Motor neuron (in vitro differentiated cells): ENCODE measurements at regions of chr17 and their contacts with region 1.

Region 1: GRCh38 chr17:8785547-8786413 is 13.4 kb downstream of the MFSD6L start:
- ATAC-seq: peak; percentile 81 to 100 (median 90)
- H3K4me3 ChIP-seq: no peak overlapping the region
- H3K27ac ChIP-seq: no peak overlapping the region
- H3K4me1 ChIP-seq: no peaks in the 10 kb centered on the region

Region 2: GRCh38 chr17:8079291-8080207 is 706.2 kb before region 1 on chr17:
- in situ Hi-C with region 1: loop called in 2 of 9 experiments (anchors 25 kb)
- ATAC-seq: peak; percentile 88 to 94 (median 90)
- H3K4me3 ChIP-seq: peak overlapping the region; percentile 18 to 38 (median 36)
- H3K27ac ChIP-seq: no peak overlapping the region
- H3K4me1 ChIP-seq: no peaks in the 10 kb centered on the region

Region 3: DNA sequence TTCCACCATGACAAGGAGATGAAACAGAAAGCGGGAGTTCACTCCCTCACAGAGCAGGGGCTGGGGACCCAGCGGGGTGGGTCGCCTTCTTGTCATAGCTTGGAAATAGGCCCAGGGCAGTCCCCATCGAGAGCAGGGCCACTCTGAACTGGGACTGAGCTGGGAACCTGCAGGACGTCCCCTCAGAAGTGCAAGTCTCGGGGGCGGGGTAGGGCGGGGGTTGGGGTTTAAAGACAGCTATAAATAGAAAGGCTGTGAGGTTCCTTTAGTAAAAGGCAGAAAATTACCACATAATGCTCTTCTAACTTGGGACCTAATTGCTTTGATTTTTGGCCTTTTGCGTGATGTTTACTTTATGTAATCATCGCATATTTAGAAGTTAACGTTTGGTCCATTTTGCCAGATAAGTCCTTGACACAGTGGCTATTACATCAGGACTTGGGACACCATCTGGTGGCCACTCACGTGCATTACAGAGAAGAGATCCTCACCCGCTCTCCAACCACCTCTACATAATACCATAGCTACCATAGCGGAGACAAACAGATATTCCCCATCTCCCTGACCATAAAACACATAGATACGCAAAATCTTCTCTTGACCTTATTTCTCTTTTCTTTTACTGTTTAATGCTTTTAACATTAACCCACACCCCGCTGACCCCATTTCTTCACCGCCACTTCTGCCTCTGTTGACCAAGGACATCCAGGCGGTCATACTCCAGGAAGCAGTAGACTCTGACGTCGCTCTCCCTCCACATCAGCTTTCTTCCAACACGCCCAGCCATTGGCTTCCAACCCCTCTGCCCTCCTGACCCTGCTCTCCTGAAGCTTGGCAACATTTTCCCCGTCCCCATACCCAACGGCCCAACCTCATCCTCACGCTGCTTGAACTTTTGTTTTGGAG is 109.1 kb after region 1 on chr17:
- in situ Hi-C with region 1: loop called in 1 of 9 experiments (anchors 25 kb)
- ATAC-seq: peak; percentile 81 to 99 (median 94)
- H3K4me3 ChIP-seq: no peak overlapping the region
- H3K27ac ChIP-seq: no peak overlapping the region
- H3K4me1 ChIP-seq: peaks cover 0 to 7% of the 10 kb centered on the region in 2 donors

Region 4: DNA sequence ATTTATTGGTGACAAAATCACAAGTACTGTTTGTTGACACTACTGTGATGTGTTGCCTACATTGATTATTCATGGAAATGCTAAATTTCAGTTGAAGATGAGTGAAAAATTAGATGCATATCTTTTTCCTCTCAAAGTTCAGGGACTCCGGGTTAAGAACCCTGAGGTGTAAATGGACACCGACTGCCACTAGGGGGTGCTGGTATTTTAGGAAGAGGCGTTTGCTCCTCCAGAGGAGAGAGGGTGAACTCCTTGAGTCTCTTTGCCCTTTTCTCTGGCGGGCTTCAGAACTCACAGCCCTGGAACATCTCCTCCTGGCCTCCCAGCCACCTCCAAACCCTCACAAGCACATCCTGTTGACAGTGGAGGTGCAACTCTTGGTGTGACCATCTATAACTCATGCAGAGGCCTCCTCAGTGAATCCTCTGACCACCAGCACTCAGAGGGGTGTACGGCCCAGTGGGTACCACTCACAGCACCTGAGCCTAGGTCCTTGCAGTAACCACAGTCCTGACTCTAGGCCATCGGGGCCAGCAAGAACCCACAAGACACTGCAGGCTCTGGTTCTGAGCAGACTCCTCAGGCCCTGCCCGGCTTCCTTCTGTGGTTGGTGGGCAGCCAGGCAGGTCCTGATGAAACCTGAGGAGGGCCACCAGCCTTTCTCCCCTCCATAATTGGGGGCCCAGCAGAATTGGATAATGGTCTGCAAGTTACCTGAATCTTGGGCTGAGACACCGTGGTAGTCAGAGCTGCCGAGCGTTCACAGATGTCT is 205.9 kb after region 1 on chr17:
- in situ Hi-C with region 1: no loop called
- ATAC-seq: peak in 7 of 8 experiments; percentile 39 to 96 (median 69)
- H3K4me3 ChIP-seq: no peak overlapping the region
- H3K27ac ChIP-seq: no peak overlapping the region
- H3K4me1 ChIP-seq: no peaks in the 10 kb centered on the region